Mammary epithelial cell (primary cell): ENCODE measurements at regions of chr17 and their contacts with region 1.

Region 1: DNA sequence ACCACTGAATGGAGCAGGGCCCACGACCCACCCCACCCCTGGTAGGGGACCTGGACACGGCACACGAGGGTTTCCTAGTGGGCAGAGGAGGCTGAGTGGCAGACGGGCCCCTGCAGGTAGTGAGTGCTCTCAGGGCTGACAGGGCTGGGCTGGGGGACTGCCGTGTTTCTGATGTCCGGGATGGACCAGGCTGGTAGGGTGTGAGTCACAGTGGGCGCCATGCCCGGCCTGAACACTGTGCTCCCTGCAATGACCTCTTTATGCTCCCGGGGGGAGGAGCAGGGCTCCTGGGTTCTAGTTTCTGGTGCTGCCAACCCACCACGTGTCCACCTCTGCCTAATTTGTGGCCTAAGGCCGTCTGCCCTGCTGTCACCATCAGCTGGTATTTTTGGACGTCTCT is 26.3 kb downstream of the ARHGAP23 start:
- DNase-seq: peak; percentile 75
- H3K4me3 ChIP-seq: peak overlapping the region; percentile 39 to 60 (median 58)
- H3K27ac ChIP-seq: peak overlapping the region; percentile 32
- H3K4me1 ChIP-seq: peaks cover 59% of the 10 kb centered on the region
- H3K27me3 ChIP-seq: no peaks in the 10 kb centered on the region
- CTCF ChIP-seq: no peak

Region 2: DNA sequence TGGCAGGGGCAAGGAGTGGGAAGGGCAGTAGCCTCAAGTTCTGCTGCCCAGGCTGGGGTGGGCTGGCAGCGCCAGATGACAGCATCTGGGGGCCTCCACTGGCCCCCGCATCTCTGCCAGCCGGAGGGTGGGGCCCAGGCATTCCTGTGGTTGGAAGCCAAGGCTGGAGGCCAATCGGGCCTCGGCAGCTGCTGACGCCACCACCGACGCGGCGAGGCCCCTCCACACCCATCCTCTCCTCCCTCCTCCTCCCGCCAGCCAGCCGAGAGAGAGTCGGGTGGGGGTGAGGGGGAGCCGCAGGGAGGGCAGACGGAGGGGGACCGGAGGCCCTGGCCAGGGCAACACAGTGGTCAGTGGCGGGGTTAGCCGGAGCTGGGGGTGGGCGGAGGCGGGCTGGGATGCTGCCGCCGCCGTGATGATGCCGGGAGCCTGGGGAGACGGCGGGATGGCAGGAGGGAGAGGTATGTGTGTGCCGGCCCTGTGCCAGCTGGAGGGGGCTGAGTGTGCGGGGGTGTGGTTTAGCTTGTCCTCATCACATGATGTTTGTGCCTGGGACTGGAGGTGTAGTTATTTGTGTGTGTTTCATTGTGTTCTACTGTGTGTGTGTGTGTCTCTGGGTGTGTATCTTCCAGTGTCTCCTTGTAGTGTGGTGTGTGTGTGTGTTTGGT is 10.3 kb after region 1 on chr17:
- CTCF ChIA-PET with region 1: interaction called, 4 read pairs
- dilution Hi-C with region 1: no loop called
- in situ Hi-C with region 1: no loop called
- intact Hi-C with region 1: loop called (anchors 1 kb)
- DNase-seq: peak; percentile 85
- H3K4me3 ChIP-seq: peak overlapping the region; percentile 41 to 56 (median 52)
- H3K27ac ChIP-seq: peak overlapping the region; percentile 96
- H3K4me1 ChIP-seq: peaks cover 29% of the 10 kb centered on the region
- H3K27me3 ChIP-seq: no peaks in the 10 kb centered on the region
- CTCF ChIP-seq: no peak